Left ventricle myocardium superior (tissue), 1 donor: ENCODE measurements at regions of chr4 and their contacts with region 1.

Region 1: DNA sequence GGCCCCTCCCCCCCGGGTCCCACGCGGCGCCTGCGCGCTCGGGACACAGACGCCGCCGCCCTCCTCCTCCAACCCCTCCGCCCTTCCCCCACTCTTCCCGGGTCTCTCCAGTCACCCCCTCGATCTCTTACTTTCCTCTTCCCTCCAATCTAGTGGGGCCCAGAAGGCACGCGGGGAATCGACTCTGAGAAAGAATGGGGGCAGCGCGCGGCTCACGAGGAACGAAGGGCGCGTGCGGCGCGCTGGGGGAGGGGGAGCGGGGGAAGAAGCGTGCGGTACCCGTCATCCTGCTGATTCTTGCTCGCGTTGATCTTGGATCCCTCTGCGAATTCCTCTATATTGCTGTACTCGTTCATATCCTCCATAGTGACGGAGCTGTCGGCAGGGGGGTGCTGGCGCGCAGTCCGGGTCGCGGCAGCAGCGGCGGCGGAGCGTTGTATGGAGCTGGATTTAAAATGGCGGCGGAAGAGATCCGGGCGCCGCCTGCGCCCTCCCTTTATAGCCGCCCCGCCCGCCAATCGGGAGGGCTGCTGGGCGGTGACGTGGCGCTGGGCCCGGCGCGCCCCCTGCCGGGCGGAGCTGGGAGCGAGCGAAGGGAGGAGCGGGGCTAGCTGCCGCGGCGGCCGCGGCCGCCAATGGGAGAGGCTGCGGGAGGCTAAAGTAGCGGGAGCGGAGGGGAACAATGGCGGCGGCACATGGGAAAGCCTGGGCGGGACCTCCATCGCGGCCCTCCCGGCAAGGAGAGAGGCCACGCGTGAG is 1.1 kb downstream of the HNRNPDL start:
- DNase-seq: peak; percentile 96
- ATAC-seq: peak; percentile 88

Region 2: GRCh38 chr4:82123934-82124333 is 305.2 kb before region 1 on chr4:
- intact Hi-C with region 1: no loop called
- DNase-seq: no peak
- ATAC-seq: no peak

Region 3: GRCh38 chr4:82379964-82380733 is 49.0 kb before region 1 on chr4:
- intact Hi-C with region 1: loop called (anchors 5 kb)
- DNase-seq: peak; percentile 82
- ATAC-seq: peak; percentile 97